Activated T-helper 1 cell treated with anti-CD3 and anti-CD28 coated beads, Interleukin-12 subunit alpha, Interleukin-12 subunit beta, Interleukin-2, Interleukin-4 antibody, amounts not matched to agents 30 ng/mL and 10 ng/mL and 1 ng/mL, durations not matched to agents 14 hours and 24 hours and 36 hours (primary cell): ENCODE measurements at regions of chr17 and their contacts with region 1.

Region 1: GRCh38 chr17:7687908-7688807 is at the start of gene WRAP53:
- DNase-seq: peak; percentile 94
- H3K4me3 Mint-ChIP-seq: peak within 1 kb of the TSS; percentile 95
- H3K27ac Mint-ChIP-seq: peak within 1 kb of the TSS; percentile 96
- H3K4me1 Mint-ChIP-seq: peaks cover 40% of the 10 kb centered on the region
- H3K27me3 Mint-ChIP-seq: no peaks in the 10 kb centered on the region
- total RNA-seq, gene WRAP53: 31.5 TPM in 2 replicates

Region 2: DNA sequence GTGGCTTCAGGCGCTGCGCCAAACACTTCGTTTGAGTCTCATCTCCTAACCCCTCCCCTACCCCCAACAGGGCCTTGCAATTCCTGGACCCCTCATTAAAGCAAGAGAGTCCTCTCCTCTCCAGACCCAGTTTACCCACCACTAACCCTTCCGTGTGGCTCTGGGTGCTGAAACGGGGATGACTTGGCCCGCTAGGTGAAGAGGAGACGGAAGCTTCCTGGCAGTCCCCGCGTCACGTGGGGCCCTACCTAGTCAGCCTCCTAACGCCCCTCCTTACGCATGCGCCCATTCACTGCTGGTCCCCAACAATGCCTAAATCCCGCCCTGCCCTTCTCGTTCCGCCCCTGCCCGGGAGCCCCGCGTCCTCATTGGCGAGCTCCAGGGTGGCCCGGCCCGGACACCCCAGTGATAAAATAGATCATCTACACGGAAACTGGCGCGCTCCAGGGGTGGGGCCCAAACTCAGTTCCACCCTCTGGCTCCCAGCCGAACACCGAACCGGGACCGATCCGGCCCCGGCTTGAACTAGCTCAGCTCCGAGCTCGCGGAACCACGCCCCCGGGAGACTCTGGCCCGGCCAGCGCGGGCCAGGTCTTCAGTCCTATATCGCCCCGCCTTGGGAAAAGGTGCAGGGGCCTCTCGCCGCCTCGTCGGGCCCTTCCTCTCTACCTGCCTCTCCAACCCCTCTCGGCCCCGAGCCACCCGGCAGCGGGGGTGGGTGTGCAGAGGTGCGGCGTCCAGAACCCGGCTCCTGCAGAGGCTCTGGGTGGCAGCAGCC is 652.4 kb before region 1 on chr17 and contains the start of gene SLC16A13:
- intact Hi-C with region 1: loop called (anchors 10 kb)
- DNase-seq: peak; percentile 99
- H3K4me3 Mint-ChIP-seq: peak within 1 kb of the TSS; percentile 95
- H3K27ac Mint-ChIP-seq: peak within 1 kb of the TSS; percentile 93
- H3K4me1 Mint-ChIP-seq: peaks cover 62% of the 10 kb centered on the region
- H3K27me3 Mint-ChIP-seq: no peaks in the 10 kb centered on the region
- total RNA-seq, gene SLC16A13: 14.3 and 14.8 TPM in 2 replicates

Region 3: DNA sequence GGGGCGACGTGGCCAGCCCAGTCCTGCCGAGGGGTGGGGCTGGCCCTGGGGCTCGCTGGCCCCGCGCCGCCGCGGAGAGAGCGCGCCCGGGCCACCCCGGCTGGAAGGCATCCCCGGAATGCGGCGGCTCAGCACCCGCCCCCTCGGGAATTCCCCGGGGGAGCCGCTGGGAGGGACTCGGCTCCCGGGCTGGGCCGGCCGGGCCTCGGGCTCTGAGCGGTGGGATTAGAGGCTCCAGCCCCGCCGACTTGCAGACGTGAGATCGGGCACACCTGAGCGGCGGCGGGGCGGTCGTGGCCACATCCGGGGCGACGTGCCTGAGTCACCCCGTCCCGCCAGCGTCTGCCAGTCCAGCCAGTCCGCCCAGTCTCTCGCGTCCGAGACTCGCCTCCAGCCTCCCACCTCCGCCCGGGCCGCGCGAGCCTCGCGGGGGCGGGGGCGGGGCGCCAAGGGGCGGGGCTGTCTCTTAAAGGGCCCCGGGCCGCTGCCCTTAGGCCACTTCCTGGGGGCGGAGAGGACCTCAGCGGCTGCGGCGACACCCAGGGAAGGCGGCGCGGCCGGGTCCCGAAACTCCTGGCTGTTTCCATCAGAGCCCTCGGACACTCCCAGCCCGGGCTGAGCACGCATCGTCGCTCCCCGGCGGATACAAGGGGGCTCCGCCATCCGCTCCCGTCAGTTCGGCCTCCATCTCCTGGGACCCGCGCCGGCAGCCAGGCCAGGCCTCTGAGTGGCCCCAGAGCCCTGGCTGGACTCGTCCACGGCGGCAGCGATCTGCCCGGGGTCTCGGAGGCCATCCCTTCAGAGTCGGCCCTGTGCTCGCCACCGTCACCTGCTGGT is 336.3 kb before region 1 on chr17 and contains the start of gene KCTD11:
- intact Hi-C with region 1: loop called (anchors 1 kb)
- DNase-seq: peak; percentile 76
- H3K4me3 Mint-ChIP-seq: peak within 1 kb of the TSS; percentile 84
- H3K27ac Mint-ChIP-seq: peak within 1 kb of the TSS; percentile 87
- H3K4me1 Mint-ChIP-seq: peaks cover 41% of the 10 kb centered on the region
- H3K27me3 Mint-ChIP-seq: no peaks in the 10 kb centered on the region
- total RNA-seq, gene KCTD11: 5.3 TPM in 2 replicates

Region 4: DNA sequence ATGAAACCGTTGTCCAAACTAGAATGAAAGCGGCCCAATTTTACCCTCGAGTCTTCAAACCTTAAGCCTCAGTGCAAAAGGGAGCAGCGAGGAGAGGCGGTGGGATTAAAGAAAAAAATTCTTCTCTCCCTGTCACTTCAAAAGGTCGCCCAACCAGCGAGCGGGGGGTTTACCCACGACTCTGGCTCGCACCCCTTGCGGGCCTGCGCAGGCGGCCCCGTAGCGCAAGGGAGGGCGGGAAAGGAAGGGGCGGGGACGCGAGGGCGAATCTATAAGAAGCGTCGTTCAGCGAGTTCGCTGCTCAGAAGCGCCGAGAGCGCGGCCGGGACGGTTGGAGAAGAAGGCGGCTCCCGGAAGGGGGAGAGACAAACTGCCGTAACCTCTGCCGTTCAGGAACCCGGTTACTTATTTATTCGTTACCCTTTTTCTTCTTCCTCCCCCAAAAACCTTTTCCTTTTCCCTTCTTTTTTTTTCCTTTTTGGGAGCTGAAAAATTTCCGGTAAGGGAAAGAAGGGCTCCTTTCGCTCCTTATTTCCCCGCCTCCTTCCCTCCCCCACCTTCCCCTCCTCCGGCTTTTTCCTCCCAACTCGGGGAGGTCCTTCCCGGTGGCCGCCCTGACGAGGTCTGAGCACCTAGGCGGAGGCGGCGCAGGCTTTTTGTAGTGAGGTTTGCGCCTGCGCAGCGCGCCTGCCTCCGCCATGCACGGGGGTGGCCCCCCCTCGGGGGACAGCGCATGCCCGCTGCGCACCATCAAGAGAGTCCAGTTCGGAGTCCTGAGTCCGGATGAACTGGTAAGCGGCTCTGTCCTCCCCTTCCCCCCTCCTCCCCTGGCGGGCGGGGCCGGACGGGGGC is 203.9 kb before region 1 on chr17 and contains the start of gene POLR2A:
- intact Hi-C with region 1: loop called (anchors 1 kb)
- DNase-seq: peak; percentile 96
- H3K4me3 Mint-ChIP-seq: peak within 1 kb of the TSS; percentile 96
- H3K27ac Mint-ChIP-seq: peak within 1 kb of the TSS; percentile 98
- H3K4me1 Mint-ChIP-seq: peaks cover 56% of the 10 kb centered on the region
- H3K27me3 Mint-ChIP-seq: no peaks in the 10 kb centered on the region
- total RNA-seq, gene POLR2A: 221 and 223 TPM in 2 replicates

Region 5: DNA sequence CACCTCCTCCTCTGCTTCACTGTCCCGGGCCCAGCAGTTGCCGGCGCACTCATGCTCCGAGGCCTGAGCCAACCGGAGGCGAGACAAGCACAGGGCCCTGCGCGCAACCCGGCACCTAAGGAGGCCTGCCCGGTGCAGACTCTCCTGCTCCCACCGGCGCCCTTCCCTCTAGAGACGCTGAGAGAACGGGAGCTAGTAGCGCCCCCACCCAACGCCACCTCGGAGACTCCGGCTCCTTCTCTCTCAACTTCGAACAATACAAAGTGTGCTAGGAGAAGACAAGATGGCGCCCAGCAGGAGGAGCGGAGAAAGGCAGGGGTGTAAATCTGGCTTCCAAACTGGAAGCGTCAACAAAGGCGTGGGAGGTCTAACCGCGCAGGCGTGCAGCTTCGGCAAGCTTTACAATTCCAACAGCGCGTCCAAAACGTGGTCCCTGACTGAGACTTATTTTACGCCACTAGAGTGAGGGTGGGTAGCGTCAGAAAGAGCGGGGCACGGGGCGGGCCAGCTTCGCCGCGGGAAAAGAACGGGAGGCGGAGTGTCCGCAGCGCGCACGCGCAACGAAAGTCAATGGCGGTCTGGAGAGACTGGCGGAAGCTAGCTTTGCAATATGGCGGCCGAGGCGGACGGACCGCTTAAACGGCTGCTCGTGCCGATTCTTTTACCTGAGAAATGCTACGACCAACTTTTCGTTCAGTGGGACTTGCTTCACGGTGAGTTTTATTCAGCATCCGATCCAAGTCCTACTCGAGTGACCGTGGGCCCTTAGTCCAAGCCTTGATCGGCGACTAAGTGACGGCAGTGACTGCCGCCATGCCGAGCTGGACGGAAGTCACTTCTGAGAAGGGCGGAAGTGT is 104.7 kb before region 1 on chr17 and contains the start of gene MPDU1:
- intact Hi-C with region 1: loop called (anchors 1 kb)
- DNase-seq: peak; percentile 95
- H3K4me3 Mint-ChIP-seq: peak within 1 kb of the TSS; percentile 98
- H3K27ac Mint-ChIP-seq: peak within 1 kb of the TSS; percentile 100
- H3K4me1 Mint-ChIP-seq: peaks cover 54% of the 10 kb centered on the region
- H3K27me3 Mint-ChIP-seq: no peaks in the 10 kb centered on the region
- total RNA-seq, gene MPDU1: 108 and 111 TPM in 2 replicates

Region 6: DNA sequence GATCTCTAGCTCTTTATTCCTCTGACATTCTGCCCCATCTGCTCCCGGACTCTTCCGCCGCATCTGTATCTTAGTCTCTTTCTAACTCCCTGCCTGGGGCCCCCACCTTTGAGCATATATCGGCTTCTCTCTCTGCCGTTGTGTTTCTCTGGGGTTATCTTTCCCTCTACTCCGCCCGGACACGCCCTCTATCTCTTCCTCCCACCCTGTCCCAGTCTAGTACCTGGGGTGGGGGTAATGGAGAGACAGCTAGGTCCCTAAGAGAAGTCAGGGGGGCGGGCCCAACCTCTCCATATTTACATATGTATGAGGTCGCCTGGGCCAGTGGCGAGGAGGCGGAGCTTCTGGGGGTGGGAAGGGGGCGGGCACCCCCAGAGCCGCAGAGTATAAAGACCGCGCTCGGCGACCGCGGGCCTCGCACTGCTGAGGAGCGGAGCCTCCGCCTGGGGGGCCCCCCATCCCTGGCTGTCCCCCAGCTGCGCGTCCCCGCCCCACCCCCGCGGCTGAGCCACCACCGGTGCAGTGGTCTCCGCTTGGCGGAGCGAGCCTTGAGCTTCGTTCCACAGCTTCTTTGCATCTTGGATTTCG is 37.6 kb before region 1 on chr17 and contains the start of gene ATP1B2:
- intact Hi-C with region 1: loop called (anchors 1 kb)
- DNase-seq: peak; percentile 60
- H3K4me3 Mint-ChIP-seq: peak within 1 kb of the TSS; percentile 84
- H3K27ac Mint-ChIP-seq: no peak within 1 kb of the TSS
- H3K4me1 Mint-ChIP-seq: peaks cover 11% of the 10 kb centered on the region
- H3K27me3 Mint-ChIP-seq: peaks cover 53% of the 10 kb centered on the region
- total RNA-seq, gene ATP1B2: 0.54 TPM in 2 replicates

Region 7: GRCh38 chr17:7673239-7673638 is 14.9 kb before region 1 on chr17:
- intact Hi-C with region 1: no loop called
- DNase-seq: no peak
- H3K4me3 Mint-ChIP-seq: no peak overlapping the region
- H3K27ac Mint-ChIP-seq: no peak overlapping the region
- H3K4me1 Mint-ChIP-seq: peaks cover 5% of the 10 kb centered on the region
- H3K27me3 Mint-ChIP-seq: no peaks in the 10 kb centered on the region

Region 8: GRCh38 chr17:7716901-7717755 is 29.0 kb after region 1 on chr17 and contains the start of gene DNAH2:
- intact Hi-C with region 1: no loop called
- DNase-seq: peak; percentile 16
- H3K4me3 Mint-ChIP-seq: peak within 1 kb of the TSS; percentile 77
- H3K27ac Mint-ChIP-seq: no peak within 1 kb of the TSS
- H3K4me1 Mint-ChIP-seq: peaks cover 19% of the 10 kb centered on the region
- H3K27me3 Mint-ChIP-seq: peaks cover 72% of the 10 kb centered on the region
- total RNA-seq, gene DNAH2: not detected in 2 replicates

Region 9: GRCh38 chr17:7887482-7888183 is 199.5 kb after region 1 on chr17:
- intact Hi-C with region 1: loop called (anchors 1 kb)
- DNase-seq: peak; percentile 77
- H3K4me3 Mint-ChIP-seq: no peak overlapping the region
- H3K27ac Mint-ChIP-seq: no peak overlapping the region
- H3K4me1 Mint-ChIP-seq: peaks cover 3% of the 10 kb centered on the region
- H3K27me3 Mint-ChIP-seq: no peaks in the 10 kb centered on the region